ENCODE measurements at regions of chr6 and their contacts with region 1.

Region 1: DNA sequence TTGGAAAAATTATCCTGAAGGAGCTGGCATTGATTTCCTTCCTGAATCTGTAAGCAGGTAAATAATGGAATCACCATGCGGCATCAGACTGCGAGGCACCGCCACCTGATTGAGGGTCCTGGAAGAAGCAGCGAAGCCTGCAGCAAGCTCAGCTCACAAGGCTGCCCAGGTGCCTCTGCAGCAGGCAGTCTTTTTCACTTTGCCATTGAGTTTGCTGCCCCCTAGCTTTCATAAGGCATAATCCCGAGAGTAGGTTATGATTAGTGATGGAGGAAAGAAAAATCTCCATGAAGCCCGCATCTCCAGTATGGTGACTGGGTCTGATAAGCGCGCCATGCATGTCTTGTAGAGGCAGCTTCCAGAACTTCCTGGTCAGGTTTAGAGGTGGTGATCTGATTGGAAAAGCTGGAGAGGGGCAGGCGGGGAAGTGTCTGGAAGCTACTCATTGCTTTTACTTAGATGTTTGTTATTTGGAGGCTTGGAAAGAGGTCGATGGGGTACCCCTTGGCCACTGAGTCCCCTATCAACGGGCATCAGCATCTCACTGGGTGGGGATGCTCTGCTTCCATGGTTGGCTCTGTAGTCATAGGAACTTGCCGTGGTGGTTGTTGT is 26.7 kb downstream of the IYD start:
- DNase-seq: peak; percentile 62
- H3K4me3 ChIP-seq: no peak overlapping the region
- H3K27ac ChIP-seq: no peak overlapping the region
- H3K4me1 ChIP-seq: no peaks in the 10 kb centered on the region
- H3K27me3 ChIP-seq: no peaks in the 10 kb centered on the region
- CTCF ChIP-seq: peak; percentile 65 to 81

Region 2: GRCh38 chr6:149766156-149766769 is 629.2 kb before region 1 on chr6:
- CTCF ChIA-PET with region 1: no interaction called
- dilution Hi-C with region 1: no loop called
- in situ Hi-C with region 1: no loop called
- intact Hi-C with region 1: no loop called
- DNase-seq: peak; percentile 45
- H3K4me3 ChIP-seq: no peak overlapping the region
- H3K27ac ChIP-seq: no peak overlapping the region
- H3K4me1 ChIP-seq: no peaks in the 10 kb centered on the region
- H3K27me3 ChIP-seq: no peaks in the 10 kb centered on the region
- CTCF ChIP-seq: no peak

Region 3: GRCh38 chr6:149934249-149935156 is 461.0 kb before region 1 on chr6:
- CTCF ChIA-PET with region 1: no interaction called
- dilution Hi-C with region 1: no loop called
- in situ Hi-C with region 1: loop called in 1 of 2 experiments (anchors 25 kb)
- intact Hi-C with region 1: loop called (anchors 2 kb)
- DNase-seq: peak; percentile 56
- H3K4me3 ChIP-seq: no peak overlapping the region
- H3K27ac ChIP-seq: no peak overlapping the region
- H3K4me1 ChIP-seq: peaks cover 11% of the 10 kb centered on the region
- H3K27me3 ChIP-seq: no peaks in the 10 kb centered on the region
- CTCF ChIP-seq: peak; percentile 67 to 70

Region 4: DNA sequence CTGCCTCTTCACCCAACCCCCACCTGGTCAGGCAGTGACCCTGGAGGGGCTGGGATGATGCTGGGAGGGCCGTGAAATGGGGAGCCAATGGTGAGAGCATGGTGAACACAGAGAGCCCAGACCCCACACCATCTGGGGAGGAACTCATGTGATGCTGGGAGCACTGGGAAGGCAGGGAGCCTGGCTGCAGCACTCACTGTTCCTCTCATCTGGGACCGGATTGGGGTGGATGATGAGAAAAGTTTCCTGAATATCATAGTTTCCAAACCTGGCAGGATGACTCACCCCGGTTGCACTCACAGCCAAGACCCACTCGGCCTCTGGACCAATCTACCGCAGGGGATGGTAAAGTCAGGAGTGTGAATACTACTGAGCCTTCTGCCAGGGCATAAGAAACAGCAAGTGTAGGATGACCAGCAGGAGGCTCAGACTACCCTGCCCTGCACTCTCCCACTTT is 410.0 kb before region 1 on chr6:
- CTCF ChIA-PET with region 1: no interaction called
- dilution Hi-C with region 1: no loop called
- in situ Hi-C with region 1: no loop called
- intact Hi-C with region 1: no loop called
- DNase-seq: no peak
- H3K4me3 ChIP-seq: no peak overlapping the region
- H3K27ac ChIP-seq: no peak overlapping the region
- H3K4me1 ChIP-seq: peaks cover 12% of the 10 kb centered on the region
- H3K27me3 ChIP-seq: peaks cover 34% of the 10 kb centered on the region
- CTCF ChIP-seq: no peak

Region 5: DNA sequence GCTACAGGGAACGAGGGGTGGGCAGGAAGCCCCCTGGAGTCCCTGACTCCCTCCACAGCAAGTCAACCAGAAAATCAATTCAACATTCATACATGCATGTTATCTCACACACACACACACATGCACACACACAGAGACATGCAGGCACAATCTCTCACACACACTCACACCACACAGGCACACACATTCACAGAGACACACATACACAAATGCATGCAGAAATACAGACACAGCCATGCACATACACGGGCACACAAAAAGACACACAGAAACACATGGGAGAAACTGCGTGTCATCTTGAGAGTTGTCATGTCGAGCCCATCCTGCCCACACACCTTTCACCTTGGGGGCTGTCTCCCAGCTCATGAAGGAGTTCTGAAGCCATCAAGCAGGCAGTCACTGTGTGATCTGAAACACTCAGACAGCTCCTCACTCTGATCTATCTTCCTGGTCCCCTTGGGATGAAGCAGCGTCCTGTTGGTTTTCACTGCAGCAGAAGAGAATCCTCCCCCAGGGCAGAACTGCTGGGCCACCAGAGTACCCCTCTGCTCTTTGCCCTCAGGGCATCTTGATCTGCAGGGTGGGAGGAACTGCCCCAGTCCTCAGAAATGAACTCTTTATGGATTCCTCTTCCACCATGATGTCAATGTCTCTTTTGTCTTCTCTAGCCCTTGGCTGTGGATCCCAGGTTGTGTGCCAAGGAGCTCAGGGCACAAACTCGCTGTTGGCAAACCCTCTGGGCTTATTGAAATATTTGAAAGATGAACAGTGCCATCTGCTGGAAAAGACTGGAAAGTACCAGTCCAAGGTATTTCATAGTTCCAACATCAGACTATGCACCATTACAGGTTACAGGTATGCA is 378.9 kb before region 1 on chr6:
- CTCF ChIA-PET with region 1: no interaction called
- dilution Hi-C with region 1: no loop called
- in situ Hi-C with region 1: no loop called
- intact Hi-C with region 1: loop called (anchors 5 kb)
- DNase-seq: peak; percentile 56
- H3K4me3 ChIP-seq: no peak overlapping the region
- H3K27ac ChIP-seq: no peak overlapping the region
- H3K4me1 ChIP-seq: peaks cover 5% of the 10 kb centered on the region
- H3K27me3 ChIP-seq: peaks cover 2% of the 10 kb centered on the region
- CTCF ChIP-seq: peak; percentile 47 to 50

Region 6: GRCh38 chr6:150079604-150080003 is 315.9 kb before region 1 on chr6:
- CTCF ChIA-PET with region 1: interaction called, 4 read pairs
- dilution Hi-C with region 1: loop called (anchors 5 kb)
- in situ Hi-C with region 1: no loop called
- intact Hi-C with region 1: loop called (anchors 1 kb)
- DNase-seq: no peak
- H3K4me3 ChIP-seq: no peak overlapping the region
- H3K27ac ChIP-seq: no peak overlapping the region
- H3K4me1 ChIP-seq: peaks cover 8% of the 10 kb centered on the region
- H3K27me3 ChIP-seq: no peaks in the 10 kb centered on the region
- CTCF ChIP-seq: no peak

Region 7: DNA sequence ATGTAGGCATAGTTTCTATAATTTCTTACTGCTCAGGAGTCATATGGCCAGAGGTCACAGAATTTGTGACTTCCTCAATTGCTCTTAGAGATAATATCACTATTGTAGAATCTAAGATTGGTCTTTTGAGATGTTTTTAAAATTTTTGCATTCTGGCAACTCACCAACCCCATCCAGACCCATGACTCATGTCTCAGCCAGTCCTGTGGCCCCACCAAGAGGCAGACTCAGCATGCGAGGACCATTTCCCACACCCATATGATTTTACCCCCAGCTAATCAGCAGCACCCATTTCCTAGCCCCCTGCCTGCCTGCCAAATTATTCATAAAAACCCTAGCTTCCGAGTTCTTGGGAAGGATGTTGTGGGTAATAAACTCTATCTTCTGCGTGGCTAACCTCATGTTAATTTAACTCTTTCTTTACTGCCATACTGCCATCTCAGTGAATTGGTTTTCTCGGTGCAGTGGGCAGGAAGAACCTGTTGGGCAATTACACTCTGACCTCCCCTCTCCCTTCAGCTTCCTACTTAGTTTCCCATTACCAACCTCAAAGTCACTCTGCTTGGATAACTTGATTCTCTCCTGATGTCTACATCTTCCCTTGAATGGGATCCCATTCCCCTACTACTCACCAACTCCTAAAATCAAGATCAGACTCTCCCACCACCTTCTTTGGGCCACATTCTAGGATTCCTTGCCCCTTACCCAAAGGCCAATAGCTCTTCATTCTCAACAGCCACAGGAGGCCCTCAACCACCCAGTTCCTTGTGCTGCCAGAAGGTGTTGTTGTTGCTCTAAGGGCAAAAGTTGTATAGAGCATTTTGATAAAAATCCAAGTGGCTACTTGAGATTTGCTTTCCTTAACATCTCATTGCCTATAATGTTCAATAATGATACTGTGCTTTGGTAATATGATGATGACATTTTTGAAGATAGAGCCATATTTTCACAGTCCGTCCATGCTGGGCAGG is 42.9 kb before region 1 on chr6:
- CTCF ChIA-PET with region 1: interaction called, 4 read pairs
- dilution Hi-C with region 1: no loop called
- in situ Hi-C with region 1: no loop called
- intact Hi-C with region 1: loop called (anchors 5 kb)
- DNase-seq: peak; percentile 13
- H3K4me3 ChIP-seq: no peak overlapping the region
- H3K27ac ChIP-seq: no peak overlapping the region
- H3K4me1 ChIP-seq: peaks cover 6% of the 10 kb centered on the region
- H3K27me3 ChIP-seq: no peaks in the 10 kb centered on the region
- CTCF ChIP-seq: peak in 1 of 2 donors; percentile 24